PC-9 (cell line): ENCODE measurements at regions of chr19 and their contacts with region 1.

Region 1: DNA sequence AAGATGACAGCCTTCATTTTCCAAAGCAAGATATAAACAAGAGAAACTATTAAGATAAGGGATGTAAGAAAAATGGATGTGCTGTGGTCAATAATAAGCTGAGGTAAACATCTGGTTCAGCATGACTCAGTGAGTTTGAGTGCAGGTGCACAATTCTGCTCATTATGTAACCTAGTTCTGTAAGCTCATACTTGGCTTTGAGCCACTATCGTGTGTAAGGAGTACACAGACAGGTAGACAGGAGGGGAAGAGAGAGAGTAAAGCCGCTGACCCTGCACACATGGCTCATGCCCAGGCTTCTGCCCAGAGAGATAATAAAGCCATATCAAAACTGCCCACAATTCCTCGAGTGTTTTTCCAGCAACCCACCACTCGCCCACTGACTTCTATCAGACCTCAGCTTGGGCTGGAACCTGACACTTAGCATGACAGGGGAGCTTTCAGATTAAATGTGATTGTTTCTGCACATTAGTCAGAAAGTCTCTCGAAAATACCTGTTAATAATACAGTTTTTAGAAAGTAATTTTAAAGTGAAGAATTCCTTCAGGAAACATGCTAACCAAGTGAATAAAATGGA is 51.7 kb downstream of the ZNF91 start:
- DNase-seq: no peak
- H3K4me3 ChIP-seq: no peak overlapping the region
- H3K27ac ChIP-seq: no peak overlapping the region
- H3K4me1 ChIP-seq: no peaks in the 10 kb centered on the region
- H3K27me3 ChIP-seq: no peaks in the 10 kb centered on the region
- CTCF ChIP-seq: no peak

Region 2: DNA sequence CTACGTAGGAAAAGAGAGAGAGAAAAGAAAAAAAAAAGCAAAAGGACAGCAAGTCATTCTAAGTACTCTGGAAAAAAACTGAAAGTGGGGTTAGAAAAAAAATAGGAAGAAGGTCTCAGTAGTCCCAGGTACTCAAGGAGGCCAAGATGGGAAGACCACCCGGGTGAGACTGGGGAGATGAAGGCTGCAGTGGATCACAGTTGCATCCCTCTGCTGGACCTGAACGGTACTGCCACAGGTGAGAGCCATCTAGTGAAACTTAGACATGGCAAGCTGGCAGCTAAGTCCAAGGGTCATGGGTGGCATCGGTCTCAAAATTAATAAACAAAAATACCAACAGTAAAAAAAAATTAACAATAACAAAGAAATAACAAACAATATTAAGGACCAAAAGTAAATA is 92.8 kb after region 1 on chr19:
- CTCF ChIA-PET with region 1: no interaction called
- POLR2A ChIA-PET with region 1: interaction called, 10 read pairs
- intact Hi-C with region 1: no loop called
- DNase-seq: peak in 1 of 2 experiments; percentile 17
- H3K4me3 ChIP-seq: no peak overlapping the region
- H3K27ac ChIP-seq: no peak overlapping the region
- H3K4me1 ChIP-seq: no peaks in the 10 kb centered on the region
- H3K27me3 ChIP-seq: no peaks in the 10 kb centered on the region
- CTCF ChIP-seq: peak; percentile 56